Heart left ventricle (tissue), 16 donors: ENCODE measurements at regions of chr18 and their contacts with region 1.

Region 1: GRCh38 chr18:43587538-43588153 is 310.4 kb upstream of the SYT4 start:
- DNase-seq: no peak
- ATAC-seq: peak in 2 of 4 donors; percentile 38 to 65
- H3K4me3 ChIP-seq: no peak overlapping the region
- H3K27ac ChIP-seq: no peak overlapping the region
- H3K4me1 ChIP-seq: peaks cover 0 to 6% (median 0%) of the 10 kb centered on the region in 12 donors
- H3K27me3 ChIP-seq: no peaks in the 10 kb centered on the region
- CTCF ChIP-seq: peak; percentile 58 to 79 (median 68)
- POLR2A ChIP-seq: no peak

Region 2: GRCh38 chr18:42053188-42053781 is 1534.4 kb before region 1 on chr18:
- intact Hi-C with region 1: loop called in 1 of 10 experiments (anchors 5 kb)
- DNase-seq: peak in 4 of 5 donors; percentile 29 to 41 (median 32)
- ATAC-seq: peak in 3 of 4 donors; percentile 54 to 69 (median 64)
- H3K4me3 ChIP-seq: peak overlapping the region in 1 of 12 donors; percentile 25
- H3K27ac ChIP-seq: no peak overlapping the region
- H3K4me1 ChIP-seq: peaks cover 0 to 8% (median 0%) of the 10 kb centered on the region in 12 donors
- H3K27me3 ChIP-seq: no peaks in the 10 kb centered on the region
- CTCF ChIP-seq: peak; percentile 69 to 91 (median 81)
- POLR2A ChIP-seq: no peak

Region 3: GRCh38 chr18:43571078-43571689 is 16.5 kb before region 1 on chr18:
- intact Hi-C with region 1: loop called in 4 of 10 experiments (anchors 1 to 2 kb)
- DNase-seq: no peak
- ATAC-seq: no peak
- H3K4me3 ChIP-seq: no peak overlapping the region
- H3K27ac ChIP-seq: no peak overlapping the region
- H3K4me1 ChIP-seq: no peaks in the 10 kb centered on the region
- H3K27me3 ChIP-seq: no peaks in the 10 kb centered on the region
- CTCF ChIP-seq: peak; percentile 54 to 81 (median 71)
- POLR2A ChIP-seq: no peak